GM12878 (cell line): ENCODE measurements at regions of chr15 and their contacts with region 1.

Region 1: DNA sequence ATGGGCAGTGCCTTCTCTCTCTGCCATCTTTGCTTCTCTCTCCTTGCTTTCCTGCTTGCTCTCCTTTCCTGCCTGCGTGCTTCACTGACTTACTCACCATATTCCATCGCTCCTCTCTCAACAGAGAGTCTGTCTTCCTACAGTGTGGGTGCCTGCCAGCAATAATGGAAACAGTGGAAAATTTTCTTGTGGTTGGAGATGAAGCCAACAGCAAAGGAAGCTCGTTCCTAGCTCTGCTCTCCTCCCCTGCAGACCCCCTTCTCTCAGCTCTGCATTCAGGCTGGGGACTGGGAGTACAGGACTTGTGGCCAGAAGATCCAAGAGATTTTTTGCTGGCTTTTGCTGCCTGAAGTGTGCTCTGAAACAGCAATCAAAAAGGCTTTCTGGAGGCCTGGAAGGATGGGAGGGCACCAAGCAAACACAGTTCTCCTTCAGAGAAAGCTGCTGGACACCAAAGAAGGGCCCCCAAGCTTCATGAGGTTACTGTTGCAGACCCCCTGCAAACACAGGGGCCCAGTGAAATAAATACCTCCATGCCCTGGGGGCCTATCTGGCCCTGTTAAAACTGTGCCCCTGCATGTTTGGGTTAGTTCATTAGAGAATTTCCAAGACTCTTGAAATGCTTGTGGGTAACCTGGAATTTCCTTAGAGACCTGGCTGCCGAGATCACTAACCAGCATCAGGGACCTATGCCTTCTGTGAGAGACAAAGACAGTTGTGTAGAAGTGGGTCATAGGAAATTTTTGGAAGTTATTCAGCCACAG is 149.9 kb upstream of the RASGRP1 start:
- DNase-seq: no peak
- ATAC-seq: no peak
- H3K4me3 ChIP-seq: no peak overlapping the region
- H3K27ac ChIP-seq: no peak overlapping the region
- H3K4me1 ChIP-seq: no peaks in the 10 kb centered on the region
- H3K27me3 ChIP-seq: no peaks in the 10 kb centered on the region; a peak in 1 of 4 replicates
- CTCF ChIP-seq: no peak
- EP300 ChIP-seq: no peak
- POLR2A ChIP-seq: no peak
- RAD21 ChIP-seq: no peak

Region 2: DNA sequence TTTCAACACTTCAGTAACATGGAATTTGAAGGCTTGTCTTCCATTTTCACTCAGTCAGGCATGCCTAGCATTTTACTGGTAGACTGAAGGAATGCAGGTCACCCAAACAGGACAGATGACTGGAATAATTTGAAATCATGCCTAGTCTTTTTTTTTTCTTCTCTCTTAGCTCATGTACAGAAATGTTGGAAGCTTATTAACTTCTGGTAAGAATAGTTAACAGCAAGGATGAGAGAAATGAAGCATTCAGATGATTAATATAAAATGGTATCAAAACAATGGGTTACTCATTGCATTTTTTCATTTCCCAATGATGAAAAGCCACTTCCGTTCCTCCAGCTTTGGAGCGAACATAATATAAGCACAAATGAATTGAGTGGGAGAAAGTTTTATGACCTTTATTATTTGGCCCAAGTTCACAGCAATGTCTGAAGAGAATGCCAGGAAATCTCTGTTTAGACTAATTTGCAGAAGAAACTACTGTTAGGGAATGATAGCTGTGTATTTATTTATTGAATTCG is 281.7 kb after region 1 on chr15:
- CTCF ChIA-PET with region 1: no interaction called
- POLR2A ChIA-PET with region 1: no interaction called
- RAD21 ChIA-PET with region 1: no interaction called
- SMC1A ChIA-PET with region 1: no interaction called
- in situ Hi-C with region 1: no loop called
- intact Hi-C with region 1: no loop called
- DNase-seq: no peak
- ATAC-seq: no peak
- H3K4me3 ChIP-seq: no peak overlapping the region
- H3K27ac ChIP-seq: no peak overlapping the region
- H3K4me1 ChIP-seq: no peaks in the 10 kb centered on the region
- H3K27me3 ChIP-seq: no peaks in the 10 kb centered on the region; a peak in 1 of 4 replicates
- CTCF ChIP-seq: no peak
- EP300 ChIP-seq: no peak
- POLR2A ChIP-seq: no peak
- RAD21 ChIP-seq: no peak

Region 3: GRCh38 chr15:39747326-39747725 is 1032.8 kb after region 1 on chr15:
- CTCF ChIA-PET with region 1: no interaction called
- POLR2A ChIA-PET with region 1: no interaction called
- RAD21 ChIA-PET with region 1: no interaction called
- SMC1A ChIA-PET with region 1: no interaction called
- in situ Hi-C with region 1: loop called (anchors 10 kb)
- intact Hi-C with region 1: loop called (anchors 10 kb)
- DNase-seq: no peak
- ATAC-seq: no peak
- H3K4me3 ChIP-seq: no peak overlapping the region
- H3K27ac ChIP-seq: no peak overlapping the region
- H3K4me1 ChIP-seq: no peaks in the 10 kb centered on the region
- H3K27me3 ChIP-seq: peaks cover 0 to 3% of the 10 kb centered on the region in 2 experiments; a peak in 1 of 4 replicates
- CTCF ChIP-seq: no peak
- EP300 ChIP-seq: no peak
- POLR2A ChIP-seq: no peak
- RAD21 ChIP-seq: no peak